H1 (cell line): ENCODE measurements at regions of chr16 and their contacts with region 1.

Region 1: DNA sequence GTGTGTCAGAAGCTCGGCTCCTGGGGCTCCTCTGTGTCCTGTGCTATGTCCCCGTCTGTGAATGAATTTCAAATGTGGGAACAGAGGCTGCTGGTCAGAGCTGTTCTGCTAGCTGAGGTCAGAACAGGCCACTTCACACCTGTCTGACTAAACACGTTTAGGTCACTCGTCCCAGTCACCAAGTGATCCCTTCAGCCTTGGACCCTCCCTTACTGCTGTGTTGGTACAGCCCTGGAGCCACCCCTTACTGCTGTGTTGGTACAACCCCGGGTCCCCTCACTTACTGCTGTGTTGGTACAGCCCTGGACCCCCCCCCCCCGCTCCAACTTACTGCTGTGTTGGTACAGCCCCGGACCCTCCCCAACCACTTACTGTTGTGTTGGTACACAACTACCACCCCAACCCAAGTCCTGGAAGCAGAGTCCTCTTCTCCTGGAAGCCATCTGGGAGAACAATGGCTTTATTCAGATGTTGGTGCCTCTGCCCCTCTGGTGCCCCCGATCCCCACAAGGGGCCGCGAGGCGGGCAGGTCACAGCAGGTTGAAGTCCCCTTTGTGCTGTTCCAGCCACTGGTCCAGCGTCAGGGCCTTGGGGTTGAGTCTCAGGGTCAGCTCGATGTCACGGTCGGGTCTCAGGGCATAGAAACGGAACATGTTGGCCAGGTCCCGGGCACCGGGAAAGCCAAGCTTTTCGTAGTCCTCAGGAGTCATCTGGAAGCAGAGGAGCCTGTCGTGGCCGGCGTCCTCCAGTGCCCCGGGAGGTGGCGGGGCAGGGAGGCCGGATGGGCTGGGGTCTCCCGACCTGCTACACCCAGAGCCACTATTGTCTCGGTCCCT is 13.0 kb downstream of the NMRAL1 start:
- DNase-seq: peak in 1 of 2 experiments; percentile 66
- H3K4me3 ChIP-seq: no peak overlapping the region
- H3K27ac ChIP-seq: no peak overlapping the region; the same call in 1 of the 2 replicates
- H3K4me1 ChIP-seq: peaks cover 0 to 9% (median 3%) of the 10 kb centered on the region in 4 experiments; a peak in 4 of 7 replicates
- H3K27me3 ChIP-seq: no peaks in the 10 kb centered on the region
- CTCF ChIP-seq: no peak
- EP300 ChIP-seq: peak in 1 of 2 experiments; percentile 99; a peak in 2 of 3 replicates
- POLR2A ChIP-seq: no peak
- RAD21 ChIP-seq: no peak

Region 2: DNA sequence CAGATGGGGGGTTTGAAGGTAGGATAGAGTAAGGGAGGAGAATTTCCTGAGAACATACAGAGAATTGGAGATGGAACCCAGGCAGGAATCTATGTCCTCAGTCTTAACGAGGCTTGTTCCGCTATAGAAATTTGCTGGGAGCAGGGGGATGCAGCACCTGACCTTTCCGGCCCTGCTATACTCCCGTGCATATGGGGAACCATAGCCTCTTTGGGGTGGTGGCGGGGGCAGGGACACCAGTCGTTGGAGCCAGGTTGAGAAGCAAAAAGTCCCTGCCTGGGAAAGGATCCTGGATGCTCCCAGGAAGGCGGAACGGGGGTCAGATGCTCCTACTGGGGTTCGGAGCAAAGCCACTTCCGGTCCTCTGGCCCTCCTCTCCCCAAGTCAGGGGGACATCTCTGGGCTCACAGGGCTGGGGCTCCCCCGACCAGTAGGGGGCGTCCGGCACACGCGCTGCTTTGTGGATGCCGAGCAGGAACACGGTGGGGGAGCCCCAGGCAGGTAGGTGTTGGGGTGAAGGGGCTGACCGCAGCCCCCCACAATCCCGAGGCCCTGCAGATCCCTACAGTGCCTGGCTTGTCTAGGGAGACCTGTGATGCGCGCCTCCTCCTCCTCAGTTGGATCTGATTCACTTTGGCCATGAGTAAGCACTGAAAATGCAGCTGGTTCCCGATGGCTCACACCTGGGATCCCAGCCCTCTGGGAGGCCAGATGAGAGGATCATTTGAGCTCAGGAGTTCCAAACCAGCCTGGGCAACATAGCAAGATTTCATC is 173.1 kb before region 1 on chr16:
- CTCF ChIA-PET with region 1: no interaction called
- POLR2A ChIA-PET with region 1: no interaction called
- DNase-seq: peak in 1 of 2 experiments; percentile 98
- H3K4me3 ChIP-seq: peak overlapping the region in 2 of 4 experiments; percentile 2 to 16; a peak in 2 of 8 replicates
- H3K27ac ChIP-seq: peak overlapping the region; percentile 38; the same call in 1 of the 2 replicates
- H3K4me1 ChIP-seq: peaks cover 3 to 17% (median 8%) of the 10 kb centered on the region in 4 experiments
- H3K27me3 ChIP-seq: no peaks in the 10 kb centered on the region
- CTCF ChIP-seq: peak; percentile 94 to 98 (median 98)
- EP300 ChIP-seq: no peak
- POLR2A ChIP-seq: no peak
- RAD21 ChIP-seq: peak; percentile 84 to 93

Region 3: GRCh38 chr16:4303872-4304725 is 157.4 kb before region 1 on chr16:
- CTCF ChIA-PET with region 1: no interaction called
- POLR2A ChIA-PET with region 1: no interaction called
- DNase-seq: no peak
- H3K4me3 ChIP-seq: no peak overlapping the region
- H3K27ac ChIP-seq: no peak overlapping the region
- H3K4me1 ChIP-seq: peaks cover 0 to 12% (median 10%) of the 10 kb centered on the region in 4 experiments; a peak in 6 of 7 replicates
- H3K27me3 ChIP-seq: no peaks in the 10 kb centered on the region
- CTCF ChIP-seq: no peak
- EP300 ChIP-seq: no peak
- POLR2A ChIP-seq: no peak
- RAD21 ChIP-seq: no peak

Region 4: GRCh38 chr16:4442371-4442770 is 19.1 kb before region 1 on chr16:
- CTCF ChIA-PET with region 1: no interaction called
- POLR2A ChIA-PET with region 1: interaction called, 257 read pairs
- DNase-seq: no peak
- H3K4me3 ChIP-seq: no peak overlapping the region
- H3K27ac ChIP-seq: no peak overlapping the region
- H3K4me1 ChIP-seq: no peaks in the 10 kb centered on the region
- H3K27me3 ChIP-seq: no peaks in the 10 kb centered on the region
- CTCF ChIP-seq: no peak
- EP300 ChIP-seq: no peak
- POLR2A ChIP-seq: no peak
- RAD21 ChIP-seq: no peak

Region 5: GRCh38 chr16:4450926-4451619 is 10.4 kb before region 1 on chr16:
- CTCF ChIA-PET with region 1: interaction called, 4 read pairs
- POLR2A ChIA-PET with region 1: interaction called, 257 read pairs
- DNase-seq: no peak
- H3K4me3 ChIP-seq: no peak overlapping the region
- H3K27ac ChIP-seq: no peak overlapping the region; the same call in 1 of the 2 replicates
- H3K4me1 ChIP-seq: no peaks in the 10 kb centered on the region
- H3K27me3 ChIP-seq: no peaks in the 10 kb centered on the region
- CTCF ChIP-seq: no peak
- EP300 ChIP-seq: no peak
- POLR2A ChIP-seq: no peak
- RAD21 ChIP-seq: no peak

Region 6: DNA sequence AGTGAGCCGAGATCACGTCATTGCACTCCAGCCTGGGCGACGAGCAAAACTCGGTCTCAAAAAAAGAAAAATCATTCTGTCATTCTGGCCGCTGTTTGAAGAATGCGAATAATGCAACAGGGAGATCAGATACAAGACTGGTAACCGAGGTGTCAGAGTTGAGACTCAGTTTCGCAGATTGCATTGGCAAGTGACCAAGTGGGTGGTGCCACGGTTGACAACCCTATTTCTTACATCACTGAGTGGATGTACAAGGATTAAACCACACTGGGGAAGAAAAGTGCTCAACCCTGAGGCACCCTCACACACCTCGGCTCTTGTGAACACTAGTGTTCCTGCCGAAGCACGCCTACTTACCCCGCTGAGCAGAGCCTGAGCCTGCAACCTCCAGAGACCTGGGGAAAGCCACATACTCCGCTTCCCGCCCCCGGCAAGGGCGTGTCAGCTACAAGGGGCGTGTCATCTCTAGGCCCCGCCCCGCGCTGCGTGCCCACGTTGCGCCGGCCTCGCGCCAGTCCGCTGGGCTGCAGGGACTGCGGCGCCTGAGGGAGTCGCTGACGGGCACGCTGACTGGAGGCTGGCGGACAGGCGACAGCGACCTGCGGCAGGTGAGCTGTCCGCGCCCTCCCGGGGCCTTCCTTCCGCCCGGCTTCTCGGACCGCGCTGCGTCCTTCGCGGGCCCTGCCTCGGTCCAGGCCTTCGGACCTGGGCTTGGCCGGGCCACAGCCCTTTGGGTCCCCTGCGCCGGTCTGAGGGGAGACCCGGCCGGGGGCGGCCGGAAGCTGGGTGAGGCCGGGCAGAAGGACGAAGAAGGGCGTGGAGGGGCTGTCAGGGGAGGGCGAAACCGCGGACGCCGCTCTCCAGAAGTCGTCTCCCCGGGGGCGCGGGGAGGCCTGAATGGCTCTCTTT is 14.7 kb after region 1 on chr16 and contains the start of gene HMOX2:
- CTCF ChIA-PET with region 1: interaction called, 5 read pairs
- POLR2A ChIA-PET with region 1: interaction called, 257 read pairs
- DNase-seq: peak; percentile 90 to 98
- H3K4me3 ChIP-seq: peak within 1 kb of the TSS; percentile 48 to 81 (median 70)
- H3K27ac ChIP-seq: no peak within 1 kb of the TSS
- H3K4me1 ChIP-seq: peaks cover 0 to 9% (median 3%) of the 10 kb centered on the region in 4 experiments; a peak in 6 of 7 replicates
- H3K27me3 ChIP-seq: peaks cover 0 to 7% (median 7%) of the 10 kb centered on the region in 4 experiments; a peak in 6 of 7 replicates
- CTCF ChIP-seq: peak; percentile 42 to 58 (median 57)
- EP300 ChIP-seq: 0 out of 3 replicates have a peak, but pooled peaks of 1 of the 2 experiments have one; percentile 40
- POLR2A ChIP-seq: peak in 1 of 2 experiments; percentile 73; a peak in 2 of 3 replicates
- RAD21 ChIP-seq: peak; percentile 16 to 22; a peak in 2 of 4 replicates
- total RNA-seq, gene HMOX2: 45.6 and 48.4 TPM in 2 replicates